ENCODE measurements at regions of chr2 and their contacts with region 1.

Region 1: GRCh38 chr2:203951366-203951902 is 14.9 kb downstream of the ICOS start:
- DNase-seq: peak; percentile 84
- H3K4me3 Mint-ChIP-seq: peak overlapping the region; percentile 69
- H3K27ac Mint-ChIP-seq: peak overlapping the region; percentile 84
- H3K4me1 Mint-ChIP-seq: peaks cover 70% of the 10 kb centered on the region
- H3K27me3 Mint-ChIP-seq: no peaks in the 10 kb centered on the region

Region 2: DNA sequence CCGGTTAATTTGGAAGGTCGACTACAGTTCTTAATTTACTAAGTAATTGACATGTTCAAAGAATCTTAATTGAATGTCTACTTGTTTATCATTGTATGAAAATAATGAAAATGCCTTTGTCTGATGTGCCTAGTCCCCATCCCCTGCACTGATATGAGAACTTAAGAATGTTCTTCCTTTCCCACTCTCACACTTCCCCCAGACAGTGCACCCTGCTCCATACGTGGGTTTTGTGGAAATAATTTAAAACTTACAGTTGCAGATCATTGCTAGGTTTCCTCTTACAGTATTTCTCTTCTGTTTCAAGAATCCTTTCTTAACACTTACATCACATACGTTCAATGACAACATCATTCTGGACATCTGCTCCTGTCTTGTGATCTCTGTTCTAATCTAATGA is 11.4 kb before region 1 on chr2:
- intact Hi-C with region 1: loop called (anchors 1 kb)
- DNase-seq: no peak
- H3K4me3 Mint-ChIP-seq: peak overlapping the region; percentile 93
- H3K27ac Mint-ChIP-seq: peak overlapping the region; percentile 92
- H3K4me1 Mint-ChIP-seq: peaks cover 46% of the 10 kb centered on the region
- H3K27me3 Mint-ChIP-seq: no peaks in the 10 kb centered on the region

Region 3: DNA sequence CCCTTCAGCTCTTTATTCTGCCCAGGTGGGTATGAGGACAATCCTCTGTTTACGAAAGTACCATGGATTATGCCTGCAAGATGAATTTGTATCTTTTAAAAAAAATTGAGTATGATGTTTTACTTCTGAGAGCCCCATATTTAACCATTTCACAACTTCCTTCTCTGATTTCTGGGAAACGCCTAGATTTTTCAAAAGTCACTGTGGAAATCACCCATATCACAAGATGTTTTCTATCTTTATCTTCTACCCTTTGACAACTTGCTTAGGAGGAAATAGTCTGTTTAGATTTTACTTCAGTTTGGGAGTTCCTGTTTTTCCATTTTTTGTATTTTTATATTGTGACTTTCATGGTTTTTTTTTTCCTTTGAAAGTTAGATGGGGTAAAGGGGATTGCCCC is 38.1 kb after region 1 on chr2:
- intact Hi-C with region 1: loop called (anchors 1 kb)
- DNase-seq: no peak
- H3K4me3 Mint-ChIP-seq: peak overlapping the region; percentile 42
- H3K27ac Mint-ChIP-seq: peak overlapping the region; percentile 77
- H3K4me1 Mint-ChIP-seq: peaks cover 32% of the 10 kb centered on the region
- H3K27me3 Mint-ChIP-seq: no peaks in the 10 kb centered on the region

Measured in activated CD4-positive, alpha-beta T cell treated with anti-CD3 and anti-CD28 coated beads, Interleukin-2, amount 10 ng/mL, durations not matched to agents 24 days and 14 days (primary cell).